ENCODE measurements at regions of chr20 and their contacts with region 1.

Region 1: DNA sequence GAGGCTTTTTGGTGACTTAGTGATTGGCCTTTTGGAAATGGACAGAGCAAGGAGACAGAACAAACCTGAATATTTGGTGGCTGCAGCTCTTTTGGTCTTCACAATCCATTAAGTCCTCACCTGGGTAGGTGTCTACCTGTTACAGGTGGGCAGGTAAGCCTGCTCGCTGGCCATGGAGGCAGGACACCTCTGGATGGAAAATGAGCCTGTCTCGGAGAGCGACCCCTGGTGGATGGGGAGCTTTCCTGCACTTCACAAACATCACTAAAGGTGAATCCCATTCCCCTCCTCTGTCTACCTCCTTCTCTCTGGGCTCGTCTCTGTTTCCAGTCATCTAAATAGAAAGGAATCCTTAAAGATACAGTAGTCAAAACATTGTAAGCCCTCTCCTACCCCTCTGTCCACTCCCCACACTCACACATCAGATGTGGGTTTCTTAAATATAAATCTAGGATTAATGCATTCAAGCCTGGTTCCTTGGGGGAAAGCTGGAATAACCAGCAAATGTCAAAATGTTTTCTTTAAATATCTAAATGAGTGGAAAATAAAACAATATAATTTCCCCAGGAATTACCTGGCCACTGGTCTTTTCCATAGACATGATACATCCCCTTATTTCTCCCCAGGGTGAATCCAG is 304.9 kb downstream of the CDH26 start:
- DNase-seq: peak; percentile 70
- CTCF ChIP-seq: peak; percentile 54

Region 2: GRCh38 chr20:59850018-59850641 is 413.0 kb before region 1 on chr20:
- CTCF ChIA-PET with region 1: no interaction called
- POLR2A ChIA-PET with region 1: no interaction called
- DNase-seq: no peak
- CTCF ChIP-seq: peak; percentile 45

Region 3: GRCh38 chr20:59948828-59949720 is 314.0 kb before region 1 on chr20:
- CTCF ChIA-PET with region 1: interaction called, 12 read pairs
- POLR2A ChIA-PET with region 1: no interaction called
- DNase-seq: no peak
- CTCF ChIP-seq: peak; percentile 46

Region 4: GRCh38 chr20:60011512-60012507 is 251.3 kb before region 1 on chr20:
- CTCF ChIA-PET with region 1: no interaction called
- POLR2A ChIA-PET with region 1: no interaction called
- DNase-seq: no peak
- CTCF ChIP-seq: no peak

Region 5: DNA sequence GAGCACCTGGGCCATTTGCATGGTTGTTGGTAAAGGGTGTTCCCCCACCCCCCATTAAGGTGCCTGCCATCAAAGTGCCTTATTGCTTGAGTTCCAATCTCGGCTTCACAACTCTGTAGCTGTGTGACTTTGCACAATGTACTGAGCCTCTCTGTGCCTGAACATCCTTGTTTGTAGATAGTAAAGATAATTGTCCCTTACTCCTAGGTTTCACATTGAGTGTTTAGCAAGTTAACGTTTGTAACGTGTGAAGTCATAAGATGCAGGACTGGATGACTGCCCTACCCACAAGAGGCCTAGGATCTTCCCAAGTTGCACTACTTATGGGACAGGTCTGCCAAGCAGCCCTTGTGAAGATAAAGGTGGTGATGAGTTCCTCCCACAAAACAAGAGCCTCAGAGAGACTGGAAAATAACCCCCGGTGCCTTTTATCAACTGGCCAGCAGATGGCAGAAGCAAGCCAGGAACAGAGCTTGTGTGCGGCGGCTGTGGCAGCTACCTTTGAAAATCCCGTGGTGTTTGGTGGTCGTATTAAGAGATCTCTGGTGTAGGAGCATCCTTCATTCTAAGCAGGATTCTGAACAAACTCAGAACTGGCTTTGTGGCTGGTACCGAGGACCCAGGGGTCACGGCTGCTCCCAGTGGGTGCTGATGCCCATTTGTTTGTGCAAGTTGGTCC is 205.8 kb before region 1 on chr20:
- CTCF ChIA-PET with region 1: interaction called, 30 read pairs
- POLR2A ChIA-PET with region 1: no interaction called
- DNase-seq: peak; percentile 78
- CTCF ChIP-seq: peak; percentile 72

Region 6: GRCh38 chr20:60069656-60070055 is 193.4 kb before region 1 on chr20:
- CTCF ChIA-PET with region 1: no interaction called
- POLR2A ChIA-PET with region 1: no interaction called
- DNase-seq: no peak
- CTCF ChIP-seq: no peak

Region 7: GRCh38 chr20:60210779-60211617 is 52.1 kb before region 1 on chr20:
- CTCF ChIA-PET with region 1: interaction called, 25 read pairs
- POLR2A ChIA-PET with region 1: no interaction called
- DNase-seq: peak; percentile 64
- CTCF ChIP-seq: peak; percentile 72

Region 8: DNA sequence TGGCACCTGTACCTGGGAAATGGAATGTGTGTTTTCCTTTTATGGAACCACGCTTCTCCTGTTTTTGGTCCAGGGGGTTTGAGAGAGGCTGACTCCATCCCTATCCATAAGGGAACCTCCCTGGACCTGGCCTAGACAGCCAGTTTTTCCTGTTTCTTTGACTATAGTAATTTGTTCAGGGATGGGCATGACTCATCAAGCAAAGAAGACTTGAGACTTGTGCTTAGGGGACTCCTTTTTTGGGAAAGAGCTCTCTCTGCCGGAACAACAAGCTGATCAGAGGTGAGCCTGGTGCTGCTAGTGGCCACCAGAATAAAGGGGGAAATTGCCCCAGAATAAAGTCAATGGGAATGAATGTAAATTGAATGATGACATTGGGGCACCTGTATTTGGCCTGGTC is 89.0 kb after region 1 on chr20:
- CTCF ChIA-PET with region 1: no interaction called
- POLR2A ChIA-PET with region 1: no interaction called
- DNase-seq: no peak
- CTCF ChIP-seq: no peak